Activated CD4-positive, alpha-beta T cell treated with anti-CD3 and anti-CD28 coated beads, Interleukin-2, amount 10 ng/mL, durations not matched to agents 24 days and 14 days (primary cell): ENCODE measurements at regions of chrX and their contacts with region 1.

Region 1: DNA sequence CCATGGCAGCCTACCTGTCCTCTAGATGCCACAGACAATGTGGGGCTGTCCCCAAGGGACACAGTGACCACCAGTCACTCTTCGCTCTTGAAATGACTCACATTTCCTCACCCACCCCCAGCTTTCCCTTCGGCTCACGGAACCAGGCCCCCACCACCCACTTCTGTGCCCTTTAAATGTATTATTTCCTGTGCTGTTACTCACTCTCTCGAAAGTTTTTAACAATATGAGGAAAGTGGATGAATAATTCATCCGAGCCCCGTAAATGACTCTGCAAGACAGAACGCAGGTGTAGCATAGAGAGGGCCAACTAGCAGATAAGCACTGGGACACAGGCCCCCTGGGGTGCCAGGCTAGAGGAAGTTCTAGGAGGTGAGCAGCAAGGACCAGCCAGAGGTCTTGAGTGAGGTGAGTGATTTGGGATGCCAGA is 179.5 kb upstream of the TBL1X start:
- DNase-seq: peak; percentile 66
- H3K4me3 Mint-ChIP-seq: peak overlapping the region; percentile 46
- H3K27ac Mint-ChIP-seq: peak overlapping the region; percentile 88
- H3K4me1 Mint-ChIP-seq: peaks cover 24% of the 10 kb centered on the region
- H3K27me3 Mint-ChIP-seq: no peaks in the 10 kb centered on the region

Region 2: GRCh38 chrX:8820910-8821527 is 464.3 kb before region 1 on chrX:
- intact Hi-C with region 1: no loop called
- DNase-seq: no peak
- H3K4me3 Mint-ChIP-seq: no peak overlapping the region
- H3K27ac Mint-ChIP-seq: no peak overlapping the region
- H3K4me1 Mint-ChIP-seq: no peaks in the 10 kb centered on the region
- H3K27me3 Mint-ChIP-seq: peaks cover 13% of the 10 kb centered on the region

Region 3: GRCh38 chrX:9164535-9165425 is 120.6 kb before region 1 on chrX:
- intact Hi-C with region 1: loop called (anchors 5 kb)
- DNase-seq: no peak
- H3K4me3 Mint-ChIP-seq: peak overlapping the region; percentile 11
- H3K27ac Mint-ChIP-seq: peak overlapping the region; percentile 77
- H3K4me1 Mint-ChIP-seq: peaks cover 30% of the 10 kb centered on the region
- H3K27me3 Mint-ChIP-seq: no peaks in the 10 kb centered on the region

Region 4: GRCh38 chrX:9231491-9231890 is 53.9 kb before region 1 on chrX:
- intact Hi-C with region 1: loop called (anchors 10 kb)
- DNase-seq: peak; percentile 51
- H3K4me3 Mint-ChIP-seq: no peak overlapping the region
- H3K27ac Mint-ChIP-seq: no peak overlapping the region
- H3K4me1 Mint-ChIP-seq: peaks cover 9% of the 10 kb centered on the region
- H3K27me3 Mint-ChIP-seq: no peaks in the 10 kb centered on the region

Region 5: GRCh38 chrX:9258421-9259104 is 26.8 kb before region 1 on chrX:
- intact Hi-C with region 1: loop called (anchors 1 kb)
- DNase-seq: no peak
- H3K4me3 Mint-ChIP-seq: peak overlapping the region; percentile 37
- H3K27ac Mint-ChIP-seq: peak overlapping the region; percentile 41
- H3K4me1 Mint-ChIP-seq: peaks cover 20% of the 10 kb centered on the region
- H3K27me3 Mint-ChIP-seq: no peaks in the 10 kb centered on the region

Region 6: GRCh38 chrX:9439004-9439403 is 153.6 kb after region 1 on chrX:
- intact Hi-C with region 1: no loop called
- DNase-seq: no peak
- H3K4me3 Mint-ChIP-seq: no peak overlapping the region
- H3K27ac Mint-ChIP-seq: no peak overlapping the region
- H3K4me1 Mint-ChIP-seq: peaks cover 10% of the 10 kb centered on the region
- H3K27me3 Mint-ChIP-seq: no peaks in the 10 kb centered on the region

Region 7: DNA sequence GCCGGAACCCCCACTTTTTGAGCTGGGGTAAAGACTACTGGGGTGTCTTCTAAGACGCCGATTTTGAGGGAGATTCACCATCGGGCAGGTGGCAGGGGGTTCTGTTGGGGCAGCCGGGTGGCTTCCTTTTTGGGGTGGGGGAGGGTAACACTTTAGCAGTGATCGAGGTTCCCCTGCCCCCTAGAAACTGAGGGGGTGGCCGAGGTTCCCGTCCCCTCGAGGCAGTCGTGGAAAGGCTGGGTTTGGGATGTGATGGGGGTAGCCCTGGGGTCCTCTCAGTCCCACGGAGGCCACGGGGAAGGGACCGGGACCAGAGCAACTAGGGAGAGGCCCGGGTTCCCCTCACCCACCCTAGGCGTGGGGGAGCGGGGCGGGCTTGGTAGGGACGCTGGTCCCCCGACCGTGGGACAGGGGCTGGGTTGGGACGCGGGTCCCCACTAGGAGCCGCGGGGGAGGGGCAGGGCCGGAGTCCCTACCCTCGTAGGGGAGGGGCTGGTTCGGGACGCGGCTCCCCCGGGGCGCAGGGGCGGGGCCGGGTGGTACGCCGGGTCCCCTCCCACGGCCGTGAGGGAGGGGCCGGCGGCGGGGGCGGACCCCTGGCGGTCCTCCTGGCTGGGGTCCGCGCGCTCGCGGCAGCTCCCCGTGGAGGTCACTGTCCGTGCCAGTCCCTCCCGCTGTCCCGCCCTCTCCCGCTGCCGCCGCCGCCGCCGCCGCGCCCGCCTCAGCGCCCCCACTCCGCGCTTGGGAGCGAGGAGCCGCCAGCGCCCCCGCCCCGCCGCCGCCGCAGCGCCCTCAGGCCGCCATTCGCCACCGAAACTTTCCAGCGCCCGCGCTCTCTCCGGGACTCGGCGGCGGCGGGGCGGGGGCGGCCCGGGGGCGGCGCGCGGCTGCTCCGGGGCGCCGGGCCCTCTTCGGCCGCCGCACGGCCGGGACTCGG is 179.3 kb after region 1 on chrX and contains the start of gene TBL1X:
- intact Hi-C with region 1: loop called (anchors 2 kb)
- DNase-seq: peak; percentile 87
- H3K4me3 Mint-ChIP-seq: peak within 1 kb of the TSS; percentile 73
- H3K27ac Mint-ChIP-seq: peak within 1 kb of the TSS; percentile 84
- H3K4me1 Mint-ChIP-seq: peaks cover 33% of the 10 kb centered on the region
- H3K27me3 Mint-ChIP-seq: peaks cover 5% of the 10 kb centered on the region
- total RNA-seq, gene TBL1X: 20.0 and 25.5 TPM in 2 replicates

Region 8: GRCh38 chrX:9677098-9677739 is 391.9 kb after region 1 on chrX:
- intact Hi-C with region 1: loop called (anchors 10 kb)
- DNase-seq: peak; percentile 82
- H3K4me3 Mint-ChIP-seq: peak overlapping the region; percentile 58
- H3K27ac Mint-ChIP-seq: peak overlapping the region; percentile 79
- H3K4me1 Mint-ChIP-seq: peaks cover 20% of the 10 kb centered on the region
- H3K27me3 Mint-ChIP-seq: no peaks in the 10 kb centered on the region

Region 9: GRCh38 chrX:9700555-9700954 is 415.2 kb after region 1 on chrX:
- intact Hi-C with region 1: no loop called
- DNase-seq: no peak
- H3K4me3 Mint-ChIP-seq: no peak overlapping the region
- H3K27ac Mint-ChIP-seq: no peak overlapping the region
- H3K4me1 Mint-ChIP-seq: no peaks in the 10 kb centered on the region
- H3K27me3 Mint-ChIP-seq: no peaks in the 10 kb centered on the region